Common myeloid progenitor, CD34-positive (primary cell): ENCODE measurements at regions of chr3 and their contacts with region 1.

Region 1: GRCh38 chr3:18111796-18112232 is 313.3 kb downstream of the SATB1 start:
- DNase-seq: peak in 2 of 3 donors; percentile 73 to 79
- H3K4me3 ChIP-seq: peak overlapping the region in 6 of 7 experiments; percentile 27 to 77 (median 61)
- H3K27ac ChIP-seq: peak overlapping the region; percentile 77 to 88
- H3K4me1 ChIP-seq: peaks cover 0 to 12% (median 5%) of the 10 kb centered on the region in 4 experiments
- H3K27me3 ChIP-seq: no peaks in the 10 kb centered on the region

Region 2: DNA sequence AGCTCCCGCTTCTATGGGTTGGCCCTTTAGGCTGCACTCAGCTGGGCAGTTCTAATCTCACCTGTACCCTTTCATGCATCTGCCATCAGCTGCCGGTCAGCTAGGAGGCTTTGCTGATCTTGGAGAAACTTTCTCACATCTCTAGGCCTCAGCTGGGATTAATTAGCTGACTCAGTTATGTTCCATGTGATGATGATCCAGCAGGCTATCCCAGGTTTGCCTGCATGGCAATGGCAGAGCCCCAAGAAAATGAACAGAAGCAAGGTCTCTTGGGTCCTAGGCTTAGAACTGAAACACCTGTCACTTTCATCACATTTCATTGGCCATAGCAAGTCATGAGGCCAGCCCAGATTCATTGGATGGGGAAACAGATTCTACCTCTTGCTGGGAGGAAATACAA is 64.8 kb before region 1 on chr3:
- CTCF ChIA-PET with region 1: no interaction called
- POLR2A ChIA-PET with region 1: no interaction called
- DNase-seq: no peak
- H3K4me3 ChIP-seq: no peak overlapping the region
- H3K27ac ChIP-seq: no peak overlapping the region
- H3K4me1 ChIP-seq: peaks cover 0 to 15% (median 4%) of the 10 kb centered on the region in 4 experiments
- H3K27me3 ChIP-seq: no peaks in the 10 kb centered on the region

Region 3: DNA sequence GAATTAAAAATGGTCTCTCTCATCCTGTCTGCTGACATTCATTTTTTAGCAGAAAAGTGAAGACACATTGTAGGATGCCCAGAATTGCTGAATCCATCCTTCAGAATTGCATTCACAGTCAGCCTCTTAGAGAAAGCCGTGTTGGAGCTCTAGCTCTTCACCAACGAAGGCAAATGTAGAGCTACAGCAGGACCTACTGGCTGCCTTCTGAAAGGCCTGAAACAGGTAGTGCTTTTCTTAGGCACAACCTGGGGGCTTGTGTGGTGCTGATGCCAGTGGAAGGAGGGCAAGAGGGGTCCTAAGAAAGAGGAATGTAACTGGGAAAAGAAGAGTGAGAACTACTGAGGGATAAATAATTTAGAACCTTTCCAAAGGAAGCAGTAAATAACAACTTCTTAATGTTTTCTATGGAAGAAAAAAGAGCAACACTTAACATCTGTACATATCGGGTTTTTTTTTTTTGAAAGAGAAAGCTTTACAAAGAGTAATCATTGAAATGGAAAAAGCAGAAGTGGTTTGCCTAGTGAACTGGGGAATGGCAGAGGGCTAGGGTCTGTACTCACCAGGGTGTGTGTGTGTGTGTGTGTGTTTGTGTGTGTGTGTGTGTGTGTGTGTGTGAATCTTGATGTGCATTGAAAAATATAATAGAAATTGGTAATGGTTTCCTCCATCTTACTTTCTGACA is 15.5 kb after region 1 on chr3:
- CTCF ChIA-PET with region 1: interaction called, 17 read pairs
- POLR2A ChIA-PET with region 1: no interaction called
- DNase-seq: peak; percentile 82 to 97 (median 94)
- H3K4me3 ChIP-seq: peak overlapping the region in 3 of 7 experiments; percentile 39 to 47 (median 44)
- H3K27ac ChIP-seq: peak overlapping the region in 1 of 2 experiments; percentile 16
- H3K4me1 ChIP-seq: peaks cover 12 to 37% (median 28%) of the 10 kb centered on the region in 4 experiments
- H3K27me3 ChIP-seq: no peaks in the 10 kb centered on the region